Sigmoid colon (tissue), 7 donors: ENCODE measurements at regions of chr4 and their contacts with region 1.

Region 1: DNA sequence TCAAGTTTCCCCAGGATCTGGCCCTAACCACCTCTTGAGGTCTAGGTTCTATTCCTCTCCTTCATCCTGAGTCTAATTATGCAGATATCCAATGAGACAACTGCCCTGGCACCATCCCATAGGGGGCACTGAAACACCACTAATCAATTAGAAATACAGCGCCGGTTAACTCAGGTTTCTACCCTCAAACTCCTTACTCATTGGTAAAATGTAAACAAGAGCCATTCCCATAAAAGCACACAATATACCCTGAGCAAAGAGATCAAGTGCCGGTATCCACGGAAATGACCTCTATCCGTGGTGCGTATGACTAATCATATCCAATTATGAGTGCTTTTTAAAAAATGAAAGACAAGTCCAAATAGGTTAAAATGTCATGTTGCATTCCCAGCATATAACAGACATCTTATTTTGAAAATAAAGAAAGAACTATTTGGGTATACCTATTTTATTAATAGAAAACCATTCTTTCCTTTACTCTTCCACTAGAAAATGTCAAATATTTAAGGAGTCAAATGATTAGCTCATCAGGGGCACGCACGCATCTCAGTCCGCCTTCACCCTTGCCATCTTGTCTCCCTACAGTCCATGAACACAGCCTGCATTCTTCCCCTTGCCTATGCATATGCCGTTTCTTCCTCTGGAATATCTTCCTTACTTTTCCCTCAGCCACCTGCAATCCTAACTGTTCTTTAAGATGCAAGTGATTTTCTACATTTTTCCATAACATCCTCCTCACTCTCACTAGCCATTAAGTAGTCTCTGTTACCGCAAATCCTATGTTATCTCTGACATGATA is 141.1 kb downstream of the MAML3 start:
- DNase-seq: peak; percentile 69
- H3K4me3 ChIP-seq: no peak overlapping the region
- H3K27ac ChIP-seq: no peak overlapping the region
- H3K4me1 ChIP-seq: peaks cover 0 to 9% (median 6%) of the 10 kb centered on the region in 4 donors
- H3K27me3 ChIP-seq: no peaks in the 10 kb centered on the region
- CTCF ChIP-seq: peak in 2 of 4 experiments; percentile 43 to 52
- EP300 ChIP-seq: no peak
- POLR2A ChIP-seq: no peak

Region 2: DNA sequence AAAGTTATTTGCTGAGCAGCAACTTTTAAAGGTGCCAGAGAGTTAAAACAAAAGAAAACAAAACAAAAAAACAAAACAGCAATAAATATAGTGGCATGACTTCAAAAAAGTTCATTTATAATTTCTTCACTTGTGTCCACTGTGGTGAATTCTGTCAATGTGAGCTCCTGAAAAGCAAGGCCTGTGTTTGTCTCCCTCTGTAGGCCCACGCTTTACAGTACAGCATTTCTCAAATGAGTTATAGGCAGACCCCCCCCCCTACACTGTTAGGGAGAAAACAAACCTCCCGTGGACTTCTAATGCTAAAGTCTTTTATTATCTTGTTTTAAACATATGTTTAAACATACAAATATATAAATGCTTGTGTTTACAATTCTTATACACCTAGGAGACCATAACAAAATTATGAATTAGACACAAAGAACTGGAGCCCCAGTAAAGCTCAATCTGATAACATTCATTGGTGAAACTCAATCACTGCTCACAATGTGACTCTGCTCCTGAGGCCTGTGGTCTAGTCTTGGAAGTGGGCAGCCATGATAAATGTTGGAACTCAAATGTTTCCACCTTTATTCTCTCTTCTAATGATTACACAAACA is 313.6 kb after region 1 on chr4:
- intact Hi-C with region 1: loop called (anchors 10 kb)
- DNase-seq: no peak
- H3K4me3 ChIP-seq: no peak overlapping the region
- H3K27ac ChIP-seq: no peak overlapping the region
- H3K4me1 ChIP-seq: no peaks in the 10 kb centered on the region
- H3K27me3 ChIP-seq: no peaks in the 10 kb centered on the region
- CTCF ChIP-seq: peak; percentile 61 to 68 (median 64)
- EP300 ChIP-seq: no peak
- POLR2A ChIP-seq: no peak

Region 3: GRCh38 chr4:140556372-140557085 is 543.6 kb after region 1 on chr4:
- intact Hi-C with region 1: no loop called
- DNase-seq: no peak
- H3K4me3 ChIP-seq: no peak overlapping the region
- H3K27ac ChIP-seq: no peak overlapping the region
- H3K4me1 ChIP-seq: no peaks in the 10 kb centered on the region
- H3K27me3 ChIP-seq: no peaks in the 10 kb centered on the region
- CTCF ChIP-seq: no peak
- EP300 ChIP-seq: no peak
- POLR2A ChIP-seq: no peak